ENCODE measurements at regions of chr11 and their contacts with region 1.

Region 1: DNA sequence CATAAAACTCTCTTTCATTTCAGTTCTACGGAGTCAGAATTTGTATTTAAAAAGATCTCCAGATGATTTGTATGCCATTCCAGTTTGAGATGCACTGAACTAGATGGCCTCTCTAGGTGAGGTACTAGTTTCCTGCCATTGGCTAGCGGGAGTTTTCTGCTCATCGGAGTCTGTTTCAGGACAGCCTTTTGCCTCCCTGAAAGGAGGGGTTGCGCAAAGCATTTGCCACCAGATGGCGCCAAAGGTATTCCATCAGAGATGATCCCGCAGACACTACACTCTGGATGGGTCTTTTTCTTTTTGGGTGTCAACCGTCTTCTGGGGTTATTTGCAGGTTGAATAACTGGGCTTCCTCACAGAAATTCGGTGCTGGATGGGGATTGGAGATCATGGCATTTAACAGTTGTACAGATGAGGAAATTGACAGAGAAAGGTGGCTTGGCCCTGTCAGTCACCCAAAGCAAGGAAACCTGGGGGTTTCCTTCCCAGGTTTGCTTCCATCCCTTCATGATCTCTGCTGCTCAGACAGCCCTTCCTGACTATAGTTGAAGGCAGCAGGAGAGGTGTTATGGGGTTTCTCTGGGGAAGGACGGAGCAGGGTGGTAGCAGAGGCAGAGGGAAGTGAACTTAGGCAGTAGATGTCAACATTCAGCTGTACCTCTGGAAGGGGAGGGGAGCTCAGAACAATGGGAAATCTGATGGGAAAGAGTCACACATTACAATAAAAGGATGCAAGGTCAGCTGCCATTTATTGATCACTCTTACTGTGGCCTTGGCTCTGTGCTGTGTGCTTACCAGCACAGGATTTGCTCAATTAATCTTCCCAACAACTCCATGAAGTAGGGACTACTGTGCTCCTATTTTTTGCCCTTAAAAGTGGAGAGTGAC is 81.6 kb downstream of the CCDC81 start:
- DNase-seq: peak; percentile 74 to 85
- ATAC-seq: peak; percentile 72 to 97 (median 91)
- H3K4me3 ChIP-seq: no peak overlapping the region
- H3K4me3 Mint-ChIP-seq: peak overlapping the region; percentile 35
- H3K27ac ChIP-seq: no peak overlapping the region
- H3K27ac Mint-ChIP-seq: peak overlapping the region in 1 of 2 donors; percentile 9
- H3K4me1 ChIP-seq: peaks cover 7% of the 10 kb centered on the region
- H3K4me1 Mint-ChIP-seq: peaks cover 8% of the 10 kb centered on the region in 2 donors
- H3K27me3 ChIP-seq: no peaks in the 10 kb centered on the region
- H3K27me3 Mint-ChIP-seq: peaks cover 10 to 17% of the 10 kb centered on the region in 2 donors
- CTCF ChIP-seq: peak; percentile 88

Region 2: GRCh38 chr11:86571273-86571948 is 115.1 kb after region 1 on chr11:
- intact Hi-C with region 1: loop called (anchors 1 kb)
- DNase-seq: no peak
- ATAC-seq: no peak
- H3K4me3 ChIP-seq: no peak overlapping the region
- H3K4me3 Mint-ChIP-seq: no peak overlapping the region
- H3K27ac ChIP-seq: no peak overlapping the region
- H3K27ac Mint-ChIP-seq: no peak overlapping the region
- H3K4me1 ChIP-seq: no peaks in the 10 kb centered on the region
- H3K4me1 Mint-ChIP-seq: peaks cover 0 to 4% of the 10 kb centered on the region in 2 donors
- H3K27me3 ChIP-seq: no peaks in the 10 kb centered on the region
- H3K27me3 Mint-ChIP-seq: peaks cover 29 to 32% of the 10 kb centered on the region in 2 donors
- CTCF ChIP-seq: no peak

Region 3: DNA sequence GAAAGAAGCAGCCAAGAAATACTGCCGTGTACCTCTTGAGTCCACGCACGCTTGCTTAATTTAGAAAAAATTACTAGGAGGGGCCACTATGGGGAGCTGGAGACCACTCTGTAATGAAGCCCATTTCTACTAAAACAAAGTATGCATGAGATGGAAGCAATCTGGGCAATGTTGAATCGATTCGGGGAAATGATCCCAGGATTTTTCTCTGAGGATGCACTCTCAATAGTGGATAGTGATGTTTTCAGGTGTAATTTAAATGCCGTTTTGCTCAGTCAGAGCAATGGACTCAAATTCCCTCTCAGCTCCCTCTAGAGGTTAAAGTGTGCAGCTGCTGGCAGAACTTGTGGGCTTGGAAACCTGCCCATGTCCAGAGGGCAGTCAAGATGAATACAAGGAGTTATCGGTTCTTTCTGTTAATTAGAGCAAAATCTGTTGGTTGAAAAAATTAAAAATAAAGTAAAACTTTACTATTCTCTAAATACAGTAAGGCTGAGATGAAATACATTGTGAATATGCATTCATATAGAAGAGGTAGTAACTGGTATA is 152.0 kb after region 1 on chr11:
- intact Hi-C with region 1: loop called (anchors 1 kb)
- DNase-seq: peak; percentile 31 to 61
- ATAC-seq: peak; percentile 85 to 94 (median 93)
- H3K4me3 ChIP-seq: no peak overlapping the region
- H3K4me3 Mint-ChIP-seq: peak overlapping the region; percentile 0
- H3K27ac ChIP-seq: no peak overlapping the region
- H3K27ac Mint-ChIP-seq: no peak overlapping the region
- H3K4me1 ChIP-seq: no peaks in the 10 kb centered on the region
- H3K4me1 Mint-ChIP-seq: peaks cover 12 to 13% of the 10 kb centered on the region in 2 donors
- H3K27me3 ChIP-seq: no peaks in the 10 kb centered on the region
- H3K27me3 Mint-ChIP-seq: peaks cover 0 to 9% of the 10 kb centered on the region in 2 donors
- CTCF ChIP-seq: peak; percentile 99

Region 4: DNA sequence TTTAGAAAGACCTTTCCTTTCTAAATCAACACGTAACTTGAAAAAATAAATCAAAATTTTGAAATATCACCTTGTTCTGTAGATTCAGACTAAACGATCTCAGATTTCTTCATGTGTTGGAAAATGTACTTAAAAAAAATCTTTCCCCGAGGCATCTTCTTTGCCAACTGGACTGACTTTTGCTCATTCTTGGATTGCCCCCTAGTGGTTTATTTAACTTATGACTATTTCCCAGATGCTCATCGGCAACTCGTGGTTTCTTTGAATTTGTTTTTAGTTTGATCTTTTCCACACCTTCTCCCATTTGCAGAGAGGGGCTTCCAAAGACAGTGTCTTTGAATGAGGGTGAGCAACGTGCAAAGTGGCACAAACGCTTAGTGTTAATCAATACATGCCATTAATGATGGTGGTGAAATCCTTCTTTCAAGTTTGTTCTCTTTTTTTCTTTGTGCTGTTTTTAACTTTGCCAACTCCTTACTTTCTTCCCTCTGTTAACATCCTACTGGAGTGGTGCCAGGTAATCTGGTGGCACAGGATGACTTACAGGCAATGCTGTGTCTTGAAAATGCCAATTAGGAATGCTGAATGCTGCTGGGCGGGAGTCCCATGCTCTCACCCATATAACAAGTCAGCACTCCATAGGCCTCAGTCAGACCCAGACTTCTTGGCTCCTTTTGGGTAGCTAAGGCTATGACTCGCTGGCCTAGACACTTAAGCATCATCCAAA is 362.3 kb after region 1 on chr11:
- intact Hi-C with region 1: loop called (anchors 1 kb)
- DNase-seq: peak in 1 of 2 donors; percentile 69
- ATAC-seq: peak; percentile 48 to 77 (median 77)
- H3K4me3 ChIP-seq: no peak overlapping the region
- H3K4me3 Mint-ChIP-seq: no peak overlapping the region
- H3K27ac ChIP-seq: no peak overlapping the region
- H3K27ac Mint-ChIP-seq: no peak overlapping the region
- H3K4me1 ChIP-seq: no peaks in the 10 kb centered on the region
- H3K4me1 Mint-ChIP-seq: peaks cover 35 to 38% of the 10 kb centered on the region in 2 donors
- H3K27me3 ChIP-seq: no peaks in the 10 kb centered on the region
- H3K27me3 Mint-ChIP-seq: no peaks in the 10 kb centered on the region
- CTCF ChIP-seq: peak; percentile 91

Region 5: GRCh38 chr11:86919557-86920210 is 463.4 kb after region 1 on chr11:
- intact Hi-C with region 1: loop called (anchors 2 kb)
- DNase-seq: peak in 1 of 2 donors; percentile 41
- ATAC-seq: peak in 2 of 3 donors; percentile 44 to 55
- H3K4me3 ChIP-seq: no peak overlapping the region
- H3K4me3 Mint-ChIP-seq: no peak overlapping the region
- H3K27ac ChIP-seq: no peak overlapping the region
- H3K27ac Mint-ChIP-seq: no peak overlapping the region
- H3K4me1 ChIP-seq: peaks cover 8% of the 10 kb centered on the region
- H3K4me1 Mint-ChIP-seq: peaks cover 20 to 24% of the 10 kb centered on the region in 2 donors
- H3K27me3 ChIP-seq: no peaks in the 10 kb centered on the region
- H3K27me3 Mint-ChIP-seq: no peaks in the 10 kb centered on the region
- CTCF ChIP-seq: peak; percentile 38

Measured in natural killer cell (primary cell).